ENCODE measurements at regions of chr21 and their contacts with region 1.

Region 1: DNA sequence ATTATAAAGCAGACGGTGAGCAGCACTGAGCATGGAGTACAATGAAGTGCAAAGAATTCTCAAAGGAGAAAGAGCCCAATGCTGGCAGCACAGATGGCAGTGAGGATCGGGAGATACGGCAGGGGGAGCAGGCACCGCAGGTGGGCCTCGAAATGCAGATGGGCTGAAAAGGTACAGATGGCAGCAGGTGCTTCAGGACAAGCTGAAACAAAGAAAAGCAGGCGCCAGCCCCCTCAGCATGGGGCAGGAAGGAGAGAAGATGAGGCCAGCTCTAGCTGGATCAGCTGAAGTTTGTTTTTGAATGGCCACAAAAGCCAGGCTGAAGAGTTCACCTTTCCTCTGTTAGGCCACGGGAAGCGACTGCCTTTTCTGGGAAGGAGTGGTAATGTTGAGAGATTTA is 7.7 kb downstream of the CFAP298 start:
- DNase-seq: no peak
- ATAC-seq: no peak
- H3K4me3 ChIP-seq: no peak overlapping the region
- H3K27ac ChIP-seq: no peak overlapping the region
- H3K4me1 ChIP-seq: no peaks in the 10 kb centered on the region
- H3K27me3 ChIP-seq: no peaks in the 10 kb centered on the region

Region 2: DNA sequence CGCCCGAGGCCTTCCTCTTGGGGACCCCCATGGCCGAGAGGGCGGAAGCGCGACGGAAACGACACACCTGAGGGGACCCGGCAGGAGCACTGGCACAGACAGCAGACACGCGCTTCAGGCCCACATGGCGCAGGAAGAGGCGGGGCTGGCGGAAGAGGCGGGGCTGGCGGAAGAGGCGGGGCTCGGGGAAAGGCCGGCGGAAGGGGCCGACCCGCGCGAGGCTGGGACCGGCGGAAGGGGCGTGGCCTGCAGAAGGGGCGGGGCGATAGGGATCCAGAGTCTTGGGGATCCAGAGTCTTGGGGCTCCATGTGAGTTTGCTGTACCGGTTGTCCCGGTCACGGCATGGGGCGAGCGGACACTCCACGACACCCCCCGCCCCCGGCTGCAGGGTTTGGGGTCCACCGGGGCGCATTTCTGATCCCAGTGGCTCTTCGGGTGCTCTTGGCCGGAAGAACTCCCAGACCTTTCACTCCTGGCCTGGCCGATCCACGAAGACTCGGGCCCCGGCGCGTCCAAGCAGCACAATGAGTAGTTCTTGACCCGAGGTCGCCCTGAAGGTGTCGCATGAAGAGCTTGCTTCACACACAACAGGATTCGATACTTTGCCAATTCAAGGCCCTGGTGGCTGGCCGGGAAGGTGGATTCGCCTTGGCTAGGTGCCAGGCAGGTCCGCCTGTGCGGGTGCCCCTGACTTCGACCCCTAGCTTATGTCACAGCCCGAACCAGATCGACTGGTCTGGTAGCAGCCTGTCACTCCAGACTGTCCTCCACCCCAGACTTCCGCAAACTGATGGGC is 211.4 kb before region 1 on chr21 and contains the start of gene URB1:
- intact Hi-C with region 1: loop called in 1 of 4 experiments (anchors 10 kb)
- DNase-seq: peak; percentile 95 to 98 (median 98)
- ATAC-seq: peak; percentile 99
- H3K4me3 ChIP-seq: peak within 1 kb of the TSS; percentile 87
- H3K27ac ChIP-seq: peak within 1 kb of the TSS; percentile 73
- H3K4me1 ChIP-seq: peaks cover 2% of the 10 kb centered on the region
- H3K27me3 ChIP-seq: no peaks in the 10 kb centered on the region
- total RNA-seq, gene URB1: 8.3 to 13.8 (median 9.9) TPM

Region 3: GRCh38 chr21:32442566-32443318 is 161.7 kb before region 1 on chr21:
- intact Hi-C with region 1: no loop called
- DNase-seq: no peak
- ATAC-seq: peak in 1 of 2 donors; percentile 60
- H3K4me3 ChIP-seq: no peak overlapping the region
- H3K27ac ChIP-seq: no peak overlapping the region
- H3K4me1 ChIP-seq: peaks cover 4% of the 10 kb centered on the region
- H3K27me3 ChIP-seq: no peaks in the 10 kb centered on the region

Region 4: GRCh38 chr21:32641710-32642698 is 37.5 kb after region 1 on chr21:
- intact Hi-C with region 1: no loop called
- DNase-seq: no peak
- ATAC-seq: no peak
- H3K4me3 ChIP-seq: no peak overlapping the region
- H3K27ac ChIP-seq: no peak overlapping the region
- H3K4me1 ChIP-seq: no peaks in the 10 kb centered on the region
- H3K27me3 ChIP-seq: no peaks in the 10 kb centered on the region

Measured in right cardiac atrium (tissue), 5 donors.